ENCODE measurements at regions of chr1 and their contacts with region 1.

Region 1: GRCh38 chr1:203006948-203007871 is at the start of gene TMEM183A:
- DNase-seq: peak; percentile 97 to 98
- H3K4me3 ChIP-seq: peak within 1 kb of the TSS; percentile 51
- H3K4me3 Mint-ChIP-seq: peak within 1 kb of the TSS; percentile 91
- H3K27ac Mint-ChIP-seq: peak within 1 kb of the TSS; percentile 88
- H3K4me1 ChIP-seq: peaks cover 5% of the 10 kb centered on the region; the same call in 1 of the 2 replicates
- H3K4me1 Mint-ChIP-seq: peaks cover 22% of the 10 kb centered on the region
- H3K27me3 ChIP-seq: no peaks in the 10 kb centered on the region
- H3K27me3 Mint-ChIP-seq: no peaks in the 10 kb centered on the region
- CTCF ChIP-seq: no peak
- total RNA-seq, gene TMEM183A: 62.8 and 74.3 TPM in 2 replicates

Region 2: DNA sequence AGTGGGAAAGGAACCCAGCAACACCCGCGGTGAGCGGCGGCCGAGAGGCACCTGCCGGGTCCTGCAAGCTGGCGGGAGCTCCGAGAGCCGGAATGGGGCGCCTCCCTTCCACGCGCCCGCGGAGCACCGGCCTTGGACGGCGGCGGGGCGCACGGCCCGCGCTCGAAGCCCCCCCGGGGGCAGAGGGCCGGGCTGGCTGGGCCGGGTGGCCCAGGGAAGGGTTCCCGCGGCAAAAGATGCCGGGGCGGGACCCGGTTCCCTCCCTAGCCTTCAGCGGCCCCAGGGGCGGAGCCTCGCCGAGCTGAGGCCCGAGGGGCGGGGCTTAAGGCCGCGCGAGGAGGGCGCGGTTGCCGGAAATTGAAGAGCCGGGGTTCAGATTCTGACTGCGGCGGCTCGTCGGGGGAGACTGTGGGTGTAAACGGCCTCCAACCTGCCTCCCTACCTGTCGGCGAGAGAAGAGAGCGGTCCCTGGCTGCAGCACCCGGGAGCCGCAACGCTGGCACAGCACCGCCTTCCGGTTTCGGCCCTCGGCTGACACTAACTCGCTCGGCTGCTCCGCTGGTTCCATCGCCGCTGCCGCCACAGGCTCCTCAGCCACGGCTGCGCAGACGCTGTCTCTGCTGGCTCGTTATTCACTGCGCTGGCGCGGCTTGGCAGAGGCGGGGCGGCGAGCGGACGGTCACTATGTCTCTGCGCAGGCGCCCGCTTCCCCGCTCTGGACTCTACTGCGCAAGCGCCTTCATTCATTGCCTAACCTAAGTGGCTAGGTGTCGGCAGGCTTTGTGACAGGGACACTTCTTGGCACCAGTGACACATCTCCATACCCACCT is 118.5 kb before region 1 on chr1 and contains the start of gene RABIF:
- CTCF ChIA-PET with region 1: no interaction called
- POLR2A ChIA-PET with region 1: interaction called, 10 read pairs
- intact Hi-C with region 1: loop called (anchors 2 kb)
- DNase-seq: peak; percentile 96 to 97
- H3K4me3 ChIP-seq: peak within 1 kb of the TSS; percentile 52
- H3K4me3 Mint-ChIP-seq: peak within 1 kb of the TSS; percentile 80
- H3K27ac Mint-ChIP-seq: peak within 1 kb of the TSS; percentile 87
- H3K4me1 ChIP-seq: 0 out of 2 replicates have a peak, but pooled peaks cover 4% of the 10 kb centered on the region
- H3K4me1 Mint-ChIP-seq: peaks cover 15% of the 10 kb centered on the region
- H3K27me3 ChIP-seq: no peaks in the 10 kb centered on the region
- H3K27me3 Mint-ChIP-seq: no peaks in the 10 kb centered on the region
- CTCF ChIP-seq: peak in 1 of 2 experiments; percentile 41
- total RNA-seq, gene RABIF: 9.2 and 9.6 TPM in 2 replicates

Region 3: DNA sequence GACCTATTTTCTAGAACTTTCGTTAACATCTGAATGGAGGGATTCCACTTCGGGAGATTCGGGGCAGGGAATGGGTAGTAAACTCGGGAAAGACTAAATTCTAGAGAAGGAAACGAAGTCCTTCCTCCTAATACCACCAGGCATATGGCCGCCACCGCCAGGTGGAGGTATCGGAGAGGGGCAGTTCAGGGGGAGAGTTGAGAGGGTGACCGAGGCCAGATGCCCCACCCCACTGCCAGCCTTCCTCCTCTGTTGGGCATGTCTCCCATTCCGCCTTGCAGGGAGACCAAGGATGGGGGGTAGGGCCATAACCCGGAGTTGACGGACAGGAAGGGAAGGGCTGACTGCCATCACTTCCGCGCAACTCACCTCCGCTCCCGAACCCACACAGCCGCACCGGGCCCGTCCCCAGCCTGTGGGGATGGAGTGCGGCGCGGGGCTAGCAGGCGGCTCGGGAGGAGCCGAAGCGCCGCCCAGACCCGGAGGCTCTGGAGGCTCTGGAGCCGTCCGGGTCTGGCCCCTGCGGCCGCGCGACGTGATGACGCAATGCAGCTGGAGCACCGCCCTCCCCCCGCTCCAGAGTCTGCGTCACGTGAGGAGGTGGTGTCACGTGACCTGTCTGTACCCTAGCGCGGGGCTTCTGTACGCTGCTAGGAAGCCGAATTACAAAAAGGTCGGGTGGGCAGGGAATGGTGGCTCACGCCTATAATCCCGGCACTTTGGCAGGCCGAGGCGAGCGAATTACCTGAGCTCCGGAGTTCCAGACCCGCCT is 80.3 kb before region 1 on chr1 and contains the start of gene KLHL12:
- CTCF ChIA-PET with region 1: no interaction called
- POLR2A ChIA-PET with region 1: interaction called, 15 read pairs
- intact Hi-C with region 1: no loop called
- DNase-seq: peak; percentile 97 to 98
- H3K4me3 ChIP-seq: peak within 1 kb of the TSS; percentile 73
- H3K4me3 Mint-ChIP-seq: peak within 1 kb of the TSS; percentile 97
- H3K27ac Mint-ChIP-seq: peak within 1 kb of the TSS; percentile 94
- H3K4me1 ChIP-seq: 0 out of 2 replicates have a peak, but pooled peaks cover 3% of the 10 kb centered on the region
- H3K4me1 Mint-ChIP-seq: no peaks in the 10 kb centered on the region
- H3K27me3 ChIP-seq: no peaks in the 10 kb centered on the region
- H3K27me3 Mint-ChIP-seq: no peaks in the 10 kb centered on the region
- CTCF ChIP-seq: peak; percentile 65 to 82
- total RNA-seq, gene KLHL12: 23.2 and 23.6 TPM in 2 replicates

Region 4: DNA sequence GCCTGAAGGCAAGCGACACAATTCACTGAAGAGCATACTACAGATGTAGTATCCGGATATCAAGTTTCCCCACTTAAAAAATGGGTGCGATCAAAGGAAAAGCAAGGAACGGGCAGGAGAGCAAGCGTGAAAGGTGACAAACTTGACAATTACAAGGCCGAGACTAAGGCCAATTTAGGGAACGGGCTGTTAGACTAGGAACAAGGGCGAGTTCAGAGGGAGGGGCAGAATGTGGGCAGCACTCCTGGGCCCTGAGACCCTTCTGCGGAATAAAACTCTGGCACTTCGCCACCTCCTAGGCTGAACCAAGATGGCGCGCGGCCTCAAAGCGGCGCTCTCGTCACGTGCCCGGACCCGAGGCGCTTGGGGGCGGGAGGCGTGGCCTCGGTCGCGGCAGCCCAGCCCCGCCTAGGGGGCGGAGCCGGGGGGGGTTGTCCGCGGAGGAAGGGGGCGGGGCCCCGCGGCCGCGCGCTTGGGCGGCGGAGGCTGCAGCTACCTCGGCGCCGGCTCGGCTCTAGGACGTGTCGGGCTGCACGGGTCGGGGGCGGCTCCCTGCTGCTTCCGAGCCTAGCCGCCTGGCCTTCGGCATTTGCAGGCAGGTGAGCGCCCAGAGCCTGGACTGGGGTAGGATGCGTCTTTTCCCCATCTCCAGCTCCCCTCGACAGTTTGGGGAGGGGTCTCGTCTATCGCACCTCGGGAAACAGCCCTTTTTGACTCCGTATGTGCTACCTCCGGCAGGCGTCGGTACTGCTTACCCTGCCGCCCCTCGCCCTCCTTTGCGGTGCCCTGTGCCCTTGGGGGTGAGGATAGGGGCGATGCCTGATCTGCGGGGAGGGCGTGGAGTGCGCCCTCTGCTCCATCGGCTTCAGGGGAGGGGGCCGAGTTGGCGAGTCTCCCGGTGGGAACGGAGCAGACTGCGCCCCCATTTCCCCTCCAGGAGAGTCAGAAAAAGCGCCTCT is 19.1 kb after region 1 on chr1 and contains the start of gene PPFIA4:
- CTCF ChIA-PET with region 1: interaction called, 4 read pairs
- POLR2A ChIA-PET with region 1: interaction called, 12 read pairs
- intact Hi-C with region 1: no loop called
- DNase-seq: peak; percentile 85 to 96
- H3K4me3 ChIP-seq: peak within 1 kb of the TSS; percentile 96
- H3K4me3 Mint-ChIP-seq: peak within 1 kb of the TSS; percentile 70
- H3K27ac Mint-ChIP-seq: peak within 1 kb of the TSS; percentile 68
- H3K4me1 ChIP-seq: peaks cover 6% of the 10 kb centered on the region
- H3K4me1 Mint-ChIP-seq: peaks cover 9% of the 10 kb centered on the region
- H3K27me3 ChIP-seq: no peaks in the 10 kb centered on the region
- H3K27me3 Mint-ChIP-seq: no peaks in the 10 kb centered on the region
- CTCF ChIP-seq: peak in 1 of 2 experiments; percentile 15
- total RNA-seq, gene PPFIA4: 8.7 and 9.4 TPM in 2 replicates

Region 5: DNA sequence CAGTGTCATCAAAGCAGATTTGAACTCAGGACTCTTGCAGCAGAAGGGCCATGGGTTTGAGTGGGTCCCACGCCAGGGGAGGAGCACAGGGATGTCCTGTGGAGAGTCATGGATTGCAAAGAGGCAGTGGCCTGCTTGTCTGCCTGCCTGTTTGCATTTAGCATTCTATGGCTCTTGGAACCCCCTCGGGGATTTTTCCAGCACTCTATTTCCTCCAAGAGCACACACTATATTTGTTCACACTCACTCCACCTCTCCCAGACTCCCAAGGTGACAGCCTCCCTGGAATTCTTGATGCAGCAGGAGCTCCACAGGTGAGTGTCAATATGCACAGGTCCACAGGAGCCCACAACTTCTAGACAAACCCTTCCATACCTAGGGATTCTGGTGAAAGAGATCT is 1751.4 kb after region 1 on chr1:
- CTCF ChIA-PET with region 1: interaction called, 10 read pairs
- POLR2A ChIA-PET with region 1: no interaction called
- intact Hi-C with region 1: no loop called
- DNase-seq: no peak
- H3K4me3 ChIP-seq: no peak overlapping the region
- H3K4me3 Mint-ChIP-seq: no peak overlapping the region
- H3K27ac Mint-ChIP-seq: no peak overlapping the region
- H3K4me1 ChIP-seq: no peaks in the 10 kb centered on the region
- H3K4me1 Mint-ChIP-seq: no peaks in the 10 kb centered on the region
- H3K27me3 ChIP-seq: no peaks in the 10 kb centered on the region
- H3K27me3 Mint-ChIP-seq: peaks cover 17% of the 10 kb centered on the region
- CTCF ChIP-seq: no peak

Measured in Caco-2 (cell line).